Activated CD4-positive, alpha-beta T cell treated with anti-CD3 and anti-CD28 coated beads, Interleukin-2, amount 10 ng/mL, durations not matched to agents 24 days and 14 days (primary cell): ENCODE measurements at regions of chr4 and their contacts with region 1.

Region 1: GRCh38 chr4:184538023-184538599 is 63.8 kb upstream of the IRF2 start:
- DNase-seq: peak; percentile 89
- H3K4me3 Mint-ChIP-seq: peak overlapping the region; percentile 90
- H3K27ac Mint-ChIP-seq: peak overlapping the region; percentile 92
- H3K4me1 Mint-ChIP-seq: peaks cover 33% of the 10 kb centered on the region
- H3K27me3 Mint-ChIP-seq: no peaks in the 10 kb centered on the region

Region 2: GRCh38 chr4:183645326-183645725 is 892.8 kb before region 1 on chr4:
- intact Hi-C with region 1: no loop called
- DNase-seq: no peak
- H3K4me3 Mint-ChIP-seq: no peak overlapping the region
- H3K27ac Mint-ChIP-seq: no peak overlapping the region
- H3K4me1 Mint-ChIP-seq: peaks cover 2% of the 10 kb centered on the region
- H3K27me3 Mint-ChIP-seq: no peaks in the 10 kb centered on the region

Region 3: DNA sequence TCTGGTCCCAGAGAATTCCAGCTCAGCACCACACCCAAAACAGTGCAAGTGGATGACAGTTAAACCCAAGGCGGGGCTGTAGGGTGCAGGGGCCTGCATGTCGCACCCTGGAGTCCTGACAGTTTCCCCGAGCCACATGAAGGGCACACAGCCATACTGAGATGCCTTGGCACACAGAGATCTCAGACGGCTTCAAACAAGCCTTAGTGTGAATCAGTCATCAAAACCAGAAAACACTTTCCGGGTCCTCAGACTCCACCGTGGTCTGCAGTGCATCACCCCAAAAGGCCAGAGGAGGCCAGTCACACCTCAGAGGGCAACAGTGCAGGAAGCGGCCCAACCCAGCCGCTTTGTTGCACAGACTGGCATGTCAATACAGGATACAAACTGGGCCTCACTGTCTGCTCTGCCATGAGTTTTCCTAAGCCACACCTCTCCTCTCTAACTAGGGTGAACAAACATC is 255.8 kb before region 1 on chr4:
- intact Hi-C with region 1: loop called (anchors 1 kb)
- DNase-seq: peak; percentile 87
- H3K4me3 Mint-ChIP-seq: peak overlapping the region; percentile 66
- H3K27ac Mint-ChIP-seq: peak overlapping the region; percentile 90
- H3K4me1 Mint-ChIP-seq: peaks cover 62% of the 10 kb centered on the region
- H3K27me3 Mint-ChIP-seq: no peaks in the 10 kb centered on the region

Region 4: DNA sequence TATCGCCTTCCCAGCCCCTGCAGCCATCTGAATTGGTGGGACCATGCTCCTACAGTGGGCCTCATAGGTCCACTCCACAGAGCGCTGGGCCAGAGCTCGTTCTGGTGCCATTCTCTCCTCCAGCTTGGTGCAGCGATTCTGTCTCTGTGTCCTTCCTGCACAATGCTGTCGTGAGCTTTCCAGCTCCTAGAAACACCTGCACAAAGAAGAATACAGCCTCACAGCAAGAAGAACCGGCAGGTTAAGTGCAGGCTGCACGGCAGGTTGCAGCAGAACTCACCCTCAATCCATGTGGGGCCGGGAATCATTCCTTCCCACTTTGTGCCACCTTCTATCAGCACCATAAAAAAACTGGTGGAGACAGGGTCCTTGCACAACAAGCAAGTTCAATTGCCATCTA is 219.3 kb before region 1 on chr4:
- intact Hi-C with region 1: loop called (anchors 1 kb)
- DNase-seq: peak; percentile 56
- H3K4me3 Mint-ChIP-seq: peak overlapping the region; percentile 21
- H3K27ac Mint-ChIP-seq: peak overlapping the region; percentile 93
- H3K4me1 Mint-ChIP-seq: peaks cover 50% of the 10 kb centered on the region
- H3K27me3 Mint-ChIP-seq: no peaks in the 10 kb centered on the region

Region 5: DNA sequence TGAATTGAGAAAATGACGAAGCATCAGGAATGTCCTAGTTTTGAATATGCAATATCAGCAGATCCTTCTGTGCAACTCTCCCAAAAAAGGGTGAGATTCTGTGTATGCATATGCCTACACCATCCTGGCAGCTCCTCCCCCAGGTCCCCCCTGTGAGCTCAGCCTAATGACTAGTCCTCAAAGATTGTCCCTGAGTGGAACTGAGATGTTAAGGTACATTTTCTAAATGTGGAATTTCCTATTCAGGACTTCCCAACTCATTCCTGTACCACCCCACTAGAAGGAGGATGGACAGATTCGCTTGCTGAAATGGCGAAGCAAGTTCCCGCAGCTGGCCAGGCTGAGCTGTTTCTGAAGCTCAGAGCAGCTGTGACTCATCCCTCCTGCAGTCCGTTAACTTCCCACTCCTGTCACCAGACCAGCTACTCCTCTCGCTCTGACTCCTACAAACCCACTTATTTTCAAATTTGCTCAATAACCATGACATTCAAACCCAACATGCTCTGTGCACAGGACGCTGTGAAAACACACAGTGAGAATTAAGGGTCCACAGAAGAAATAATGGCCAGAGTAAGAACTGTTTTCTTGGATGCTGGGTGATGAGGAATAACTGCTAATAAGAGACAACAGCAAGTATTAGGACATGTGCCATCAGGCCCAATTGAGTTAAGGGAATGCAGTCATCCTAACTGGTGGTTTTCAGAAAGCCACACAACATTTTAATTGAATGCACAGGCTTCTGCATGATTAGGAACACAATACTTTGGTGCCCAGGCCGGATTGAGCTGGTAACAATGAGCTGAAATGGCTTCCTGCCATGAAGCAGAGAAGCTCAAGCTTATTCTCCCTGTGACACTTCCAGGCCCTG is 23.8 kb before region 1 on chr4:
- intact Hi-C with region 1: loop called (anchors 1 kb)
- DNase-seq: peak; percentile 84
- H3K4me3 Mint-ChIP-seq: peak overlapping the region; percentile 65
- H3K27ac Mint-ChIP-seq: peak overlapping the region; percentile 84
- H3K4me1 Mint-ChIP-seq: peaks cover 40% of the 10 kb centered on the region
- H3K27me3 Mint-ChIP-seq: no peaks in the 10 kb centered on the region

Region 6: DNA sequence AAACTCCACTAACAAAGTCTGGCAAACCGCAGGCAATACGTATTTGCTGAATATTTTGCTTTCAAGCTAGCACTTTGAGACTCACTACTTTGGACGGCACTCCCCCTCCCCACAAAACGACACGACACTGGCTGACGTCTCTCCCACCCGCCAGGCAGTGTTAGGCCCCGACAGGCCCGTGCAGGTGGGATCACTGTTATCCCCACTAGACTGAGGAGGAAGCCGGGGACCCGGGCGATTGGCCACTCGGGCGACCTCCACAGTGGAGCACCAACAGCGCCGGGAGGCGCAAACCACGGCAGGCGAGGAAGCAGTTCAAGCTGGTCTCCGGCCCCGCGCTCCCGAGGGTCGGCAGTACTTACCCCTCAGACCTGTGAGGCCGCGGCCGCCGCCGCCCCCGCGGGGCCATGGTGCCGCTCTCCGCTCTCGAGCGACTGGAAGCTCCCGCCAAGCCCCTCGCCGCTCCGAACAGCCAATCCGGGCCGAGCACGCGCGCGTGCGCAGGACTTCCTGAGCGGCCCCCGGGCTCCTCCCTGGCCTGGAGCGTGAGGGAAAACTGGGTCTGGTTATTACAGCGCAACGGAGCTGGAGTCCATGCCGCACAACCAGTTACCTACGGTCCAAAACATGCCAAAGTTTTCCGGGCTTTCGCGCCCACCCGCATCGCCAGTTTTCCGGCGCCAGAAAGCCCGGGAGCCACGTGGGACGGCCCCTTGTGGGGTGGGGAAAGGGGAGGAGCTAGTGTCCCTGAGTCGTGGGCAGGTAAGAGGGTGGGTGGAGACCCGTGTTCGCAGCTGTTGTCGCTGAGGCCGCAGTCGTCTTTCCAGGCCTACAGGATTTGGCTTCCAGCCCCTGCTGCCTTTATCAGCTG is 195.8 kb after region 1 on chr4 and contains the start of gene CENPU:
- intact Hi-C with region 1: loop called (anchors 5 kb)
- DNase-seq: peak; percentile 99
- H3K4me3 Mint-ChIP-seq: peak within 1 kb of the TSS; percentile 96
- H3K27ac Mint-ChIP-seq: peak within 1 kb of the TSS; percentile 93
- H3K4me1 Mint-ChIP-seq: peaks cover 41% of the 10 kb centered on the region
- H3K27me3 Mint-ChIP-seq: no peaks in the 10 kb centered on the region
- total RNA-seq, gene CENPU: 71.7 and 75.5 TPM in 2 replicates